ENCODE measurements at regions of chr12 and their contacts with region 1.

Region 1: GRCh38 chr12:27652174-27652763 is 44.0 kb upstream of the REP15 start:
- DNase-seq: no peak
- ATAC-seq: peak; percentile 75 to 87
- H3K4me3 ChIP-seq: no peak overlapping the region
- H3K27ac ChIP-seq: no peak overlapping the region
- H3K4me1 ChIP-seq: no peaks in the 10 kb centered on the region
- H3K27me3 ChIP-seq: no peaks in the 10 kb centered on the region
- CTCF ChIP-seq: peak; percentile 90

Region 2: GRCh38 chr12:26488353-26488752 is 1163.9 kb before region 1 on chr12:
- intact Hi-C with region 1: no loop called
- DNase-seq: no peak
- ATAC-seq: no peak
- H3K4me3 ChIP-seq: no peak overlapping the region
- H3K27ac ChIP-seq: no peak overlapping the region
- H3K4me1 ChIP-seq: no peaks in the 10 kb centered on the region
- H3K27me3 ChIP-seq: no peaks in the 10 kb centered on the region
- CTCF ChIP-seq: no peak

Region 3: GRCh38 chr12:27424631-27425230 is 227.5 kb before region 1 on chr12:
- intact Hi-C with region 1: loop called (anchors 5 kb)
- DNase-seq: no peak
- ATAC-seq: peak in 1 of 2 donors; percentile 68
- H3K4me3 ChIP-seq: no peak overlapping the region
- H3K27ac ChIP-seq: no peak overlapping the region
- H3K4me1 ChIP-seq: no peaks in the 10 kb centered on the region
- H3K27me3 ChIP-seq: no peaks in the 10 kb centered on the region
- CTCF ChIP-seq: peak; percentile 46

Region 4: GRCh38 chr12:28158353-28158752 is 506.1 kb after region 1 on chr12:
- intact Hi-C with region 1: no loop called
- DNase-seq: no peak
- ATAC-seq: no peak
- H3K4me3 ChIP-seq: no peak overlapping the region
- H3K27ac ChIP-seq: no peak overlapping the region
- H3K4me1 ChIP-seq: no peaks in the 10 kb centered on the region
- H3K27me3 ChIP-seq: no peaks in the 10 kb centered on the region
- CTCF ChIP-seq: no peak